Breast epithelium (tissue), 4 donors: ENCODE measurements at regions of chr2 and their contacts with region 1.

Region 1: DNA sequence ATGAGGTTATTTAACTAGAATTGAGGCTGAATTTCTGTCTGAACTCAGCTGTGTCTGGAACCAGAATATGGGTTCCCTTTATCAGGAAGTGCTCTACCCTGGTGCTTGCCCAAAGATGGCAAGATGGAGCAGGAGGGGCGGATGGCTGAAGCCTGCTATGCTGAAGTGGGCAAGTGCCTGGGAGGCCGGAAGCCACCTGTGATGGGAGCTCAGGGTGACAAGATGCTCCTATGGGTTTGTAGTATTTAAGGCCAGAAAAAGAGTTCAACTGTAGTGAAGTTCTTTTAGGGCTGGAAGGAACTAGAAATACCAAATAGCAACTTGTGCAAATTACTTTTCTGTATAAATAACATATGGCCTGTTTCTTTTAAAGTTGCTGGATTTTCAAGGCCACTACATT is 808.9 kb upstream of the RAB6C start:
- DNase-seq: no peak
- H3K4me3 ChIP-seq: no peak overlapping the region
- H3K27ac ChIP-seq: no peak overlapping the region
- H3K4me1 ChIP-seq: no peaks in the 10 kb centered on the region
- H3K27me3 ChIP-seq: no peaks in the 10 kb centered on the region
- CTCF ChIP-seq: no peak
- POLR2A ChIP-seq: no peak

Region 2: DNA sequence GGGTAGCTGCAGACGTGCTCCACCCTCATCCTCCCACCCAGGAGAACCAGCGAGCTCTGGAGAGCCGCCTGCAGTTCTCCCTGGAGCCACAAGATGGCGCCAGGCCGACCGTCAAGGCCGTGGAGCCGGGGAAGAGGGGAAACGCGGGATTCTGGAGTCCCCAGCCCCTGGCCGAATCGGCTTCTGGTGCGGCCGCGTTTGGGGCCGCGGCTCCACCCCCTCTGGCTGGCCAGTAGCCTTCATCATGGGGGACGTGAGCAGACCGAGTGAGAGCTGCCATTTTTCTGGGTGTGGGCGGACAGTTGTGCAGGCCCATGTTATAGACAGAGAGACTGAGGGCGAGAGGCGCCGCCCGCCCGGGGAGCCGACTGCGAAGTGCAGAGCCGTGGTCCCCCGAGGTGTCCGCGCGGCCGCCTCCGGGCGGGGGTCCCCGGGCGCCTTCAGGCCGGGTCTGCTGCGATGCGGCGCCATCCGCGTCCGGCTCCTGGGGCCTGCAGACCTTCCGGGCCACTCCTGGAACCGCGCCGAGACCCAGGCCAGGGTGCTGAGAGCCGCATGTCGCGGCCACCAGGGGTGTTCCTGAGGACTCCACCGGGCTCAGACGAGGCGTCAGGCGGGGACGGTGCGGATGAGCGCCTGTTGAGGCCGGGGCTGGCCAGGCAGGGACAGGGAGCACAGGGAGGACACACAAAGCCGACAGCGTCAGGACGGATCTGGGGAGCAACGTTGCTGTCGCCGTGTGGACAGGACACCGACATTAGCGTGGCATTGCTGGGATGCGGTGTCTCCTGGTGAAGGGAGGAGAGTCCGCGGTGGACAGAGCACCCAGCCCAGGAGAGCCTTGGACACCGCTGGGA is 433.7 kb before region 1 on chr2:
- intact Hi-C with region 1: no loop called
- DNase-seq: peak; percentile 47 to 72
- H3K4me3 ChIP-seq: peak overlapping the region; percentile 19 to 59 (median 28)
- H3K27ac ChIP-seq: no peak overlapping the region
- H3K4me1 ChIP-seq: no peaks in the 10 kb centered on the region
- H3K27me3 ChIP-seq: no peaks in the 10 kb centered on the region
- CTCF ChIP-seq: peak; percentile 81 to 90 (median 89)
- POLR2A ChIP-seq: no peak

Region 3: GRCh38 chr2:129237966-129238725 is 67.6 kb after region 1 on chr2:
- intact Hi-C with region 1: loop called (anchors 5 kb)
- DNase-seq: no peak
- H3K4me3 ChIP-seq: no peak overlapping the region
- H3K27ac ChIP-seq: no peak overlapping the region
- H3K4me1 ChIP-seq: no peaks in the 10 kb centered on the region
- H3K27me3 ChIP-seq: no peaks in the 10 kb centered on the region
- CTCF ChIP-seq: no peak
- POLR2A ChIP-seq: no peak